IMR-90 (cell line): ENCODE measurements at regions of chr2 and their contacts with region 1.

Region 1: GRCh38 chr2:72605836-72606442 is 219.9 kb downstream of the EXOC6B start:
- DNase-seq: peak; percentile 39
- ATAC-seq: peak; percentile 75
- H3K4me3 ChIP-seq: no peak overlapping the region
- H3K27ac ChIP-seq: no peak overlapping the region
- H3K4me1 ChIP-seq: no peaks in the 10 kb centered on the region
- H3K27me3 ChIP-seq: no peaks in the 10 kb centered on the region
- CTCF ChIP-seq: peak; percentile 68
- POLR2A ChIP-seq: no peak
- RAD21 ChIP-seq: peak; percentile 37; the same call in 1 of the 2 replicates

Region 2: GRCh38 chr2:72649810-72650209 is 43.9 kb after region 1 on chr2:
- CTCF ChIA-PET with region 1: no interaction called
- POLR2A ChIA-PET with region 1: no interaction called
- dilution Hi-C with region 1: no loop called
- in situ Hi-C with region 1: no loop called
- intact Hi-C with region 1: no loop called
- DNase-seq: no peak
- ATAC-seq: no peak
- H3K4me3 ChIP-seq: no peak overlapping the region
- H3K27ac ChIP-seq: no peak overlapping the region
- H3K4me1 ChIP-seq: no peaks in the 10 kb centered on the region
- H3K27me3 ChIP-seq: no peaks in the 10 kb centered on the region
- CTCF ChIP-seq: no peak
- POLR2A ChIP-seq: no peak
- RAD21 ChIP-seq: no peak

Region 3: GRCh38 chr2:72727356-72727755 is 121.4 kb after region 1 on chr2:
- CTCF ChIA-PET with region 1: no interaction called
- POLR2A ChIA-PET with region 1: no interaction called
- dilution Hi-C with region 1: no loop called
- in situ Hi-C with region 1: no loop called
- intact Hi-C with region 1: loop called (anchors 5 kb)
- DNase-seq: no peak
- ATAC-seq: no peak
- H3K4me3 ChIP-seq: no peak overlapping the region
- H3K27ac ChIP-seq: no peak overlapping the region
- H3K4me1 ChIP-seq: peaks cover 4% of the 10 kb centered on the region; the same call in 1 of the 2 replicates
- H3K27me3 ChIP-seq: no peaks in the 10 kb centered on the region
- CTCF ChIP-seq: no peak
- POLR2A ChIP-seq: no peak
- RAD21 ChIP-seq: no peak